ENCODE measurements at regions of chr4 and their contacts with region 1.

Region 1: DNA sequence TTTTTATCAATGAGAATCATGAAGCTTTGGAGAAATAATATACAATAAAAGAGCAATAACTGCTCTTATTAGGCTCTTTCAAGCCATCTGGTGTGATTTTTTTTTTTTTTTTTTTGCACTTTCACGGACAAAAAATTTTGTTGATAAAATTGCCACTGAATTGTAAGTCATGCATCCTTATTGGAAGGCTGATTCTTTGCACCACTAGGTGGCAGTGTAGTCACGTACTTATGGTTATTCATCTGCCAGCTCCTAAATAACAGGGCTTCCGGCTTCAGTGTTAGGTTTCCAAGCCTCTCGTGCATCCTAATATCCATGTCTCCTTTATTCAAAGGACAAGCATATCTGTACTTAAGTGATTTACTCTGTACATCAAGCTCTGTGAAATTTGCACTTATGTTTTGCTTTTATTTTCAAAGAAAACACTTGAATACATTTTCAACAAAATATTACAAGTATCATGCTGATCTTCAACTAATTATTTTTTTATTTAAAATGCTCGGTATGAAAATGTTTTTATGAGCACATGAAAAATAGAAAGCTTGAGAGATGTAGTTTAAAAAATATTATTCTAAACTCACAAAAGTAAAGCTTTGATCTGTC is 1578.3 kb upstream of the TENM3 start:
- DNase-seq: peak; percentile 63
- H3K27ac ChIP-seq: no peak overlapping the region
- CTCF ChIP-seq: peak; percentile 83

Region 2: DNA sequence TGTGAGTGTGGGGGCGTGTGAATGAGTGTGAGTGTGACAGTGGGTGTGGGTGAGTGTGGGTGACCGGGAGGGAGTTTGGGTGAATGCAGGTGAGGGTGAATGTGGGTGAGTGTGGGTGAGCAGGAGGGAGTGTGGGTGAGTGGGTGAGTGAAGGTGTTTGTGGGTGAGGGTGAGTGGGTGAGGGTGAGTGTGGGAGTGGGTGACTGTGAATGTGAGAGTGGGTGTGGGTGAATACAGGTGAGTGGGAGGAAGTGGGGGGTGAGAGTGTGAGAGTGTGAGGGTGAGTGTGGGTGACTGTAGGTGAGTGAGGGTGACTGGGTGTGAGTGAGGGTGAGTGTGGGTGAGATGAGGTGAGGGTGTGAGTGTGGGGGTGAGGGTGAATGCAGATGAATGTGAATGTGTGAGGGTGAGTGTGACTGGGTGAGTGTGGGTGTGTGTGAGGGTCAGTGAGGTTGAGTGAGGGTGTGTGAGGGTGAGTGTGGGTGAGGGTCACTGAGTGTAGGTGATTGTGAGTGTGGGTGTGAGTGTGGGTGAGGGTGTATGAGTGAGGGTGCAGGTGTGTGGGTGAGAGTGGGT is 98.9 kb before region 1 on chr4:
- CTCF ChIA-PET with region 1: interaction called, 10 read pairs
- POLR2A ChIA-PET with region 1: no interaction called
- DNase-seq: no peak
- H3K27ac ChIP-seq: no peak overlapping the region
- CTCF ChIP-seq: no peak